ENCODE measurements at regions of chr2 and their contacts with region 1.

Region 1: DNA sequence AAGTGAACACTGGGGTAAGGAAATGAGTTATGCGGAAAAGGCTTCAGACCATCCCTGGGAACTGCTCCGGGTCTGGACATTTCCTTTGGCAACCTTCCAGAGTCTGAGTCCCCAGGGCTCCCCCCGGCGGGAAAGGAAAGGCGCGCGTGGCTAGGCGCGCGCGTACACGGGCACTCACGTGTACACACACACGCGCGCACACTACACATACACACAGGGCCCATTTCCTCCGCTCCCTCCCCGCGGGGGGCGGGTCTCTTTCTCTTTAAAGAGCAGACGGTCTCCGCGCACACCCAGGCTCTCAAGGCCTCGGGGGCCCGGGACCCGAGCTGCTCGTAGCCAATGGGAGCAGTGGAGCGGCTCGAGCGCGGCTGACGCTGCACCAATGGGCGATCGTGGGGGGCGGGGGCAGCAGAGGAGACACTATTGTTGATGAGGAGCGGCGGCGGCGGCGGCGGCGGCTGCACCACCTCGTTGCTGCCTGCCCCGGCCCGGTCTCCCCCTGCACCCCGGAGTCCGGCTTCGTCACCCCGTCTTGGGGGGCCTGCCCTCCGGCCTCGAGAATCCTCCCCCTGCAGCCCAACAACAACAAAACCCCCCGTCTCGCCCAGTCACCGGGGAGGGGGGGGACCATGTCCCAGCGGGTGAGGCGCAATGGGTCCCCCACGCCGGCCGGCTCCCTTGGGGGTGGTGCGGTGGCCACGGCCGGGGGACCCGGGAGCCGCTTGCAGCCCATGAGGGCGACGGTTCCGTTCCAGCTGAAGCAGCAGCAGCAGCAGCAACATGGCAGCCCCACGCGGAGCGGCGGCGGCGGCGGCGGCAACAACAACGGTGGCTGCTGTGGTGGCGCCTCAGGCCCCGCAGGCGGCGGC is at the start of gene FAM117B:
- DNase-seq: peak; percentile 99
- H3K4me3 ChIP-seq: peak within 1 kb of the TSS; percentile 75 to 90
- H3K27ac ChIP-seq: peak within 1 kb of the TSS; percentile 78 to 87
- H3K4me1 ChIP-seq: peaks cover 3 to 8% of the 10 kb centered on the region in 2 donors
- H3K27me3 ChIP-seq: no peaks in the 10 kb centered on the region
- CTCF ChIP-seq: peak in 1 of 3 experiments; percentile 5
- total RNA-seq, gene FAM117B: 30.1 TPM

Region 2: DNA sequence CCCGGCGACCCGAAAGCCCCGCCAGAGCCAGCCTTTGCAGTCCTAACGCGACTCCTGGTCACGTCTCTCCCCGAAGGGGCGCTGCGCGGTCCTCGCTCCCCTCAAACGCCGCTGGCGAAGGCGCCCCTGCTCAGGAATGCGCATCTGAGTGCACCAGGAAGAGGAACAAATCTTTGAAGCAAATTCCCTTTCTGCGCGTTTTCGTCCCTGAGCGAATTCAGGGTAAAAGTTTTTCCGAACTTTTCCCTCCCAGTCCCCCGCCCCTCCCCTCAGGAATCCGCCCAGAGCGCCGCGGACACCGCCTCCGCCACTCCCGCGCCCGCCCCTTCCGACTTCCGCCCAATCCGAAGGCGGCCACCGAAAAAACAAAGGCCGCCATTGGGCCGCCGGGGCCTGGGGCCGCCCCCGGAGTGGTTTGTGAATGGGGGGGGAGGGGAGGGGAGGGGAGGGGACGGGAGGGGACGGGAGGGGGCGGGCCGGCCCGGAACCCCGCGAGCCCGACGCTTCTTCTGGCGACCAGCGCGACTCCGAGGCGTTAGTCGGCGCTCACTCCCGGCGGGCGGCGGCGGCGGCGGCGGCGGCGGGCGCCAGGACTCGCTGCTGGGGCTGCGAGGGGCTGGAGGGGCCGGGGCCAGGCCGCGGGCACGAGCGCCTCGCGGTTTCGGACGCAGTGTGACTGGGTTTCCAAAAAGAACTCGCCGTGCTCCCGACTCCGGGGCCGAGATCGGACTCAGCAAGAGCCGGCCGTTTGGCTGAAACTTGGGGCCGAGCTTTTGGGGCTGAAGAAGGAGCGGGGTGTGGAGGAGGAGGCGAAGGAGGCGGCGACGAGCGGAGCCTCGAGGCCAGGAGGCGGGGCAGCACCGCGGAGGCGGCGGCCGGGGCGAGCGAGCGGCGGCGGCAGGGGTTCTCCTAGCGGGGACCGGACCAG is 601.2 kb before region 1 on chr2 and contains the start of gene FZD7:
- intact Hi-C with region 1: loop called (anchors 5 kb)
- DNase-seq: peak; percentile 72 to 95
- H3K4me3 ChIP-seq: peak within 1 kb of the TSS; percentile 61 to 81
- H3K27ac ChIP-seq: peak within 1 kb of the TSS; percentile 95 to 96
- H3K4me1 ChIP-seq: peaks cover 0 to 15% of the 10 kb centered on the region in 2 donors
- H3K27me3 ChIP-seq: no peaks in the 10 kb centered on the region
- CTCF ChIP-seq: peak in 1 of 3 experiments; percentile 28
- total RNA-seq, gene FZD7: 32.5 TPM

Region 3: DNA sequence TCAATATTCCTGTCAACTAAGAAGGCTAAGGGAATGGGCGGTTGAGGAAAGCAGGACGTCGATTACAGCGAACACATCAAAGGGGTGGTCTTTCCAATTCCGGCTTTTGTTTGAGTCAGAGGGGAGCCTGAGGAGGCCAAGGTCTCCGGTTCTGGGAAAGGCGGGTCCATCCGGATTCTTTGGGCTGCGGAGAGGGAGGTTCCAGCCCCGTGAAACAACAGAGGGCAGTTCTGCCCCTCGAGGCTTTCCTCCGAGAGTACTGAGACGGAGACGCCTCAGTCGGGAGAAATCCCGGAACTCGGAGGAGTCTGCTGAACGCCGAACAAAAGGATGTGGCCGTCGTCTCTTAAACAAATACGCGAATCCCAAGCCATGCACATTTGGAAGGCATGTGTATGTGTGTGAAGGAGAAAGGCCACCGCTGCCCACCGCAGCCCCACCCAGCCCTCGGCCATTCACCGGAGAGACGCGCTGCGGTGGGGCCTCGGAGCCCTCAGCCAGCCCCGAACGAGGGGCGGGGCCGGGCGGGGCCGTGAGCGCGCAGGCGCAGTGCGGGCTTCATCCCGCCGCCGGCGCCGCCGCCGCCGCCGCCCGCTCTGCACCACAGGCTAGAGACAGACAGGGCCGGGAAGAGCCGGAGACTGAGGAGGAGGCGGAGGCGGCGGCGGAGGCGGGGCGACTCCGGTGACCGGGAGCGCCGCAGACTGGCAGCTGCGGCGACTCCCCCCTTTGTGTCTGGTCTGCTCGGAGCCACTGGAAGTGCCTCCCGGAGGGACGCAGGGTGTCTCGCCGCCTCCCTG is 259.0 kb before region 1 on chr2 and contains the start of gene BMPR2:
- intact Hi-C with region 1: loop called (anchors 2 kb)
- DNase-seq: peak; percentile 75 to 93
- H3K4me3 ChIP-seq: peak within 1 kb of the TSS; percentile 97 to 98
- H3K27ac ChIP-seq: peak within 1 kb of the TSS; percentile 98 to 100
- H3K4me1 ChIP-seq: peaks cover 0 to 8% of the 10 kb centered on the region in 2 donors
- H3K27me3 ChIP-seq: no peaks in the 10 kb centered on the region
- CTCF ChIP-seq: no peak
- total RNA-seq, gene BMPR2: 47.8 TPM

Region 4: DNA sequence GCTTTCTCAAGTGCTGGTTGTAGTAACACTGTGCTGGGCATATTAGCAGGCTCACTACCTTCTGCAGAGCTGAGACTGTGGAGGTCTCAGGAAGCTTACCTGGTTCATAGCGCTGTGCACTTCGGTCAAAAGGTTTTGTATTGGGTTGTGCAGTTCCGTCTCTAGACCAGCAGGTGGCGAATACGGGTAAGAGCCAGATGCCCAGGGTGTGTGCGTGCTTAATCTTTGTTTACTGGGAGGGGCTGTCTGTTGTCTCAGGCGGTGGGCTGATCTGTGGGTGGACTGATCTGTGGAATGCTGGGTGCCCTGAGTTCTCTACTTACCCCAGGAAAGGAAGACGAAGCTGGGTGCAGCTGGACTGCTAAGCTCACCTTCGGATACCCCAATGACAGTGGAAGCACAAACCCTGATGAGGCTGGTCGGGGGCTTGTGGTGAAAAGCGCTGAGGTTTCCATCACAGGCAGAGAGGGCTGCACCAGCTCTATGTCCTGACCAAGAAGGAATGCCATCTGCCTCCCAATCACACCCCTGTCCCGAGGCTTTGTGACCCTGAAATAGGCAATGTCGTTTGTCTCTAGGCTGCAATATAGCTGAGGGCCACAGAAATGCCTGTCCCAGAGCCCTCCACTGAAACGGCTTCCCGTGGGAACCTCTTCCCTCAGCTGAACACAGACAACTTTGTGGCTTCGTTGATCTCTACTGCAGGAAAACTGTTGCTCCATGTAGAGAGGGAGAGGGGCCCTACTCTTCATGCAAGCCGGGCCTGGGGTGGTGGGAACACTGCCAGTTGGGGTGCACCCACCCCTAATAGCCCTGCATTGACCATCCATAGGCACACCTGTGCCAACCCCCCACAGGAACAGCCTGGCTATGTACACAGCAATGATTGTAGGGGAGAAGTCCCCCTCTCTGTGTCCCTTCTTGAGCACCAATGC is 45.9 kb before region 1 on chr2:
- intact Hi-C with region 1: loop called (anchors 2 kb)
- DNase-seq: peak; percentile 18 to 82
- H3K4me3 ChIP-seq: peak overlapping the region; percentile 35 to 36
- H3K27ac ChIP-seq: no peak overlapping the region
- H3K4me1 ChIP-seq: peaks cover 0 to 7% of the 10 kb centered on the region in 2 donors
- H3K27me3 ChIP-seq: no peaks in the 10 kb centered on the region
- CTCF ChIP-seq: peak; percentile 79 to 94 (median 90)

Region 5: DNA sequence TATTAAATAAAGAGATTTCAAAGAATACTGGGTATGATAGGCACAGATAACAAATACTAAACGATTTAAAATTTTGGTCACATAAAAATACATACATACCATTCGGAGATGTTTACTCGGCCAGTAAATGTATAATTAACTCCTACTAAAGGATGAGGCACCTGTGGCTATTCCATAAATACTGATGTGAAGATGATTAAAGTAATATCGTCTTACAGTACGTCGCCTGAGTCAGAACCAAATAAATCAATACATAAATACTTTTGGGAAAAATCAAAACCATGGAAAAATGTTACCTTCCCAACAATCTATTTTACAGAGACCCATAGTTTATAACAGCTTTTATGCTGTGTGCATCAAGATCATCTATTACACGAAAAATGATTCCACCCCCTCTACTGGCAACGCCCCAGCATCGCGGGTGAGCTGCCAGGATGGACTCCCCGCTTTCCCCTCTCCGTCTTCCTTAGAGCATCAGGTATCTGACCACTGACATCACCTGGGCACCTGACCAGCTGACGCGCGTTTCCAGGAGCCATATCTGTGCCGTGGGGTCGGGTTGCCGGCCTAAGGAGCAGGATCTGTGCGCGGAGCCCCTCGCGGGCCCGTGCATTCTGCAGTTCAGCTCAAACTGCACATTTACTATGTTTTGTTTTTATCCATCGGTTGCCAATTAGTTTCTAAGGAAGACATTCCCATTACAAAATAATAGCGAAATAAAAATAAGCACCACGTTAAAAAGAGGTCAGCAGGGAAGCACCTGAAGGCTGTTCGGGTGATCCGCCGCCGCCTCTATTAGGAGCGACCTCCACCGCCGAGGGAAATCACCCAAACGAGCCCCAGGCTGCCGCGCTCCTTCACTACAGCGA is 235.9 kb after region 1 on chr2:
- intact Hi-C with region 1: loop called (anchors 2 kb)
- DNase-seq: peak in 1 of 2 donors; percentile 78
- H3K4me3 ChIP-seq: peak overlapping the region; percentile 85 to 87
- H3K27ac ChIP-seq: peak overlapping the region; percentile 47 to 82
- H3K4me1 ChIP-seq: no peaks in the 10 kb centered on the region
- H3K27me3 ChIP-seq: no peaks in the 10 kb centered on the region
- CTCF ChIP-seq: peak; percentile 8 to 33 (median 11)

Region 6: GRCh38 chr2:203014456-203015199 is 379.8 kb after region 1 on chr2 and contains the start of gene NBEAL1:
- intact Hi-C with region 1: loop called (anchors 10 kb)
- DNase-seq: peak; percentile 95 to 99
- H3K4me3 ChIP-seq: peak within 1 kb of the TSS; percentile 72 to 83
- H3K27ac ChIP-seq: peak within 1 kb of the TSS; percentile 90 to 97
- H3K4me1 ChIP-seq: peaks cover 0 to under 1% of the 10 kb centered on the region in 2 donors
- H3K27me3 ChIP-seq: no peaks in the 10 kb centered on the region
- CTCF ChIP-seq: no peak
- total RNA-seq, gene NBEAL1: 33.0 TPM